Activated CD8-positive, alpha-beta memory T cell treated with anti-CD3 and anti-CD28 coated beads, Interleukin-2, amount 10 ng/mL, durations not matched to agents 7 days and 5 days (primary cell): ENCODE measurements at regions of chr21 and their contacts with region 1.

Region 1: DNA sequence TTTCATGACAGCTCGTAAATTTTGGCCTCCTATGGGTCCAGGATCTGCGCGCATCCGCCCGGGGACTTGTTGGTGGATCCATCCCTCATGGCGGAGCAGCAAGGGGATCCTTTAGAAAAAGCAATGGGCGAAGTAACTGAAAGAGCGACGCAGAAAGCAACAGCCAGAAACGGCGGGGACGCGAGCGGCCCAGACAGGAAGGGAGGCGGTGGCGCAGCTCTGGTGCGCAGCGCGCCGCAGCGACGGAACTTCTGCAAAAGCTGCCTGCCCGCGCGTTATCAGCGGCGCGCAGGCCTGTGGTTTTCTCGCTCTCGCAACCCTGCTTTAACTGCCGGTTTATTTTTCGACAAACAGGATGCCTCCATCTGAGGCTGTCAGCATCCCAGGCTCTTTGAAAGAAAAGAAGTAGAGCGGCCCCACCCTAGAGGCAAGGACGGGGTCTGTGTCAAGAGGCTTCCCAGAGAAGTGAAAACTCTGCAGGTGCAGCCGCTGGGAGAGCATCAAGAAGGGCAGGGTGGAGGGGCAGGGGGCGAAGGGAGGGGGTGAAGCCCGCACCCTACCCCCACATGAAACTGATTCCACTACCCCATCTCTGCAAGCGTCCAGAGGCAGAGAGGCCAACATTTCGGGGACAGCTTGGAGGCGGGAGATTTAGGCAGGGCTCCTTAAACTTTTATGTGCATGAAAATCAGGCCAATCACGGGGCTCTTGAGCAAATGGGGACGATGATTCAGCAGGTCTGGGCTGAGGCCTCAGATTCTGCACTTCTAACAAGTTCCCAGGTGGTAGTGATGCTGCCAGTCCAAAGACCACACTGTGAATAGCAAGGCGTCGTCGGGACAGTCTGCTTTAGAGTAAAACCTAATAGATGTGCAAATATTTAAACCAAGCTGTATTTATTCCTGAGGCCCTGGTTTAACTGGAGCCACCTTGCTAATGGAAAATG is 22.2 kb downstream of the RUNX1 start:
- DNase-seq: peak; percentile 94
- ATAC-seq: peak; percentile 85
- H3K4me3 Mint-ChIP-seq: peak overlapping the region; percentile 77
- H3K27ac Mint-ChIP-seq: peak overlapping the region; percentile 100
- H3K4me1 Mint-ChIP-seq: peaks cover 80% of the 10 kb centered on the region
- H3K27me3 Mint-ChIP-seq: no peaks in the 10 kb centered on the region

Region 2: DNA sequence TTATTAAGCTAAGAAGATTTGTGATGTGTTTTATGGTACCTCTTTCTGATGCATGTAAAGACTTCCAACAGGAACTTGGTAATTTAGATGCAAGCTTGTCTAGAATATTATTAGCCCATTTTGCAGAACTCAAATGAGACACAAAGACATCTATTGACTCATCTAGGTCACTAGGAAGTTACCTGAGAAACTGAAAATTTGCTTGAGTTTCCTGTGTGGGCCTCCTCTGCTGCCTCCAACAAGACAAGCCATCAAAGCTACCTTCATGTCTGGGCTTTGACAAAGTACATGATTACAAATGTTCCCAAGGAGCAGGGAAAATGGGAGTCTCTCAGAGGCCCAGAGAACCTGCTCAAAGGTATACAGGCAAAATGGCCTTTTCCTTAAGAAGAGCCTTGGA is 16.7 kb after region 1 on chr21:
- CTCF ChIA-PET with region 1: interaction called, 37 read pairs
- DNase-seq: no peak
- ATAC-seq: no peak
- H3K4me3 Mint-ChIP-seq: peak overlapping the region; percentile 54
- H3K27ac Mint-ChIP-seq: peak overlapping the region; percentile 96
- H3K4me1 Mint-ChIP-seq: peaks cover 93% of the 10 kb centered on the region
- H3K27me3 Mint-ChIP-seq: no peaks in the 10 kb centered on the region

Region 3: DNA sequence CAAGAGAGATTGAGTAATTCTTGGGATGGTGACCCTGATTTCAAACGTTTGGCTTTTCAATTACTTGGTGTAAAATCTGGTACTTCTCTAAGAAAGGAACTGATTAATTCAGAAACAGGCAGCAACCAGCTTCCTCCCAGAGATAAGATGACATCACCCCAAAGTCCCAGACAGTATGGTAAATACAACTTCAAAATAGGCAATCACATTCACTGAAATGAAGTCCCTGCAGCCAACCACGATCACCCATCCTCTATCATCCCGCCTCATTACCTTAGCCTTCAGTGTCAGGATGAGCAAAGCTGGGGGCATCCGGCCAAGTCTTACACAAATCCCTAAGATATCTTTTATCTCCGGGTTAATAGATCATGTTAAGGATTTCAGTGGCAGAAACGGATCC is 48.7 kb after region 1 on chr21:
- CTCF ChIA-PET with region 1: no interaction called
- DNase-seq: no peak
- ATAC-seq: peak; percentile 42
- H3K4me3 Mint-ChIP-seq: no peak overlapping the region
- H3K27ac Mint-ChIP-seq: no peak overlapping the region
- H3K4me1 Mint-ChIP-seq: peaks cover 8% of the 10 kb centered on the region
- H3K27me3 Mint-ChIP-seq: peaks cover 6% of the 10 kb centered on the region